Ovary (tissue), 10 donors: ENCODE measurements at regions of chr9 and their contacts with region 1.

Region 1: DNA sequence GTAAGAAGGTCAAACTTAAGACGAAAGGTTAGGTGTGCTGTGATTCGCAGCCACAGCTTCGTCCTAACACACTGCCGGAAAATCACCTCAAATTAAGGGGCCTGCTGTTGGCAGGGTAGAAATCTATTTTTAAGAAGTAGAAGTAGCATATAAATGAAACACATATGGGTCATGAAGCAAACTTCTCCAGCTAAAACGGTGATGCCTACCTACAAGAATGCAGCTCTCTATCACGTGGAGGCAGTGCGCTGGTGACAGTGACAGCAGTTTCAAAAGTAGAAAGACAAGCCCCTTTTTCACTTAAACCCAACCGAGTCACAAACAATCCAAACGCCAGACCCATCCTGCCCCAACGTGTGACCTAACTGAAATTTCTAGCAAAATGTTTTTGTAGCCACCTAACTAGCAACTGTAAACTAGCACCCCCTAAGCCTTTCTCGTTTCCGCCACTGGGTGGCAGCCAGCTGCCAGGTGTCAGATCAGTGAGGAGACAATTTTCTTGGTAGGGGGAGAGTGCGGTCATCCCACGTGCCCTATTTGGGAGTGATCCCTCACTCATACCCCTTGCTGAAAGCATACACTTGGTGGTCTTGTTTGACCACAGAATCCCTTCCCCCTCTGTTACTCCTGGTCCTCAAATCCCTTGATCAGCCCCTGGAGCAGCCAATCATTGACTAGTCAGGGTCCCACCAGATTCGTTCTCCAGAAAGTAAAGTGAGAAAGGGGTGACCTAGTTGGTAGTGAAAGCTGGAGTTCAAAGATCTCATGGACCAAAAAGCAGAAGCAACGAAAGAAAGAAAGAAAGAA is 71.8 kb upstream of the MAMDC2 start:
- DNase-seq: peak; percentile 81 to 89 (median 84)
- H3K4me3 ChIP-seq: no peak overlapping the region
- H3K27ac ChIP-seq: no peak overlapping the region
- H3K4me1 ChIP-seq: no peaks in the 10 kb centered on the region
- H3K27me3 ChIP-seq: no peaks in the 10 kb centered on the region
- CTCF ChIP-seq: peak; percentile 64 to 89 (median 83)
- EP300 ChIP-seq: no peak
- POLR2A ChIP-seq: no peak

Region 2: GRCh38 chr9:69898714-69899209 is 73.1 kb before region 1 on chr9:
- intact Hi-C with region 1: no loop called
- DNase-seq: no peak
- H3K4me3 ChIP-seq: no peak overlapping the region
- H3K27ac ChIP-seq: no peak overlapping the region
- H3K4me1 ChIP-seq: no peaks in the 10 kb centered on the region
- H3K27me3 ChIP-seq: no peaks in the 10 kb centered on the region
- CTCF ChIP-seq: no peak
- EP300 ChIP-seq: no peak
- POLR2A ChIP-seq: no peak

Region 3: DNA sequence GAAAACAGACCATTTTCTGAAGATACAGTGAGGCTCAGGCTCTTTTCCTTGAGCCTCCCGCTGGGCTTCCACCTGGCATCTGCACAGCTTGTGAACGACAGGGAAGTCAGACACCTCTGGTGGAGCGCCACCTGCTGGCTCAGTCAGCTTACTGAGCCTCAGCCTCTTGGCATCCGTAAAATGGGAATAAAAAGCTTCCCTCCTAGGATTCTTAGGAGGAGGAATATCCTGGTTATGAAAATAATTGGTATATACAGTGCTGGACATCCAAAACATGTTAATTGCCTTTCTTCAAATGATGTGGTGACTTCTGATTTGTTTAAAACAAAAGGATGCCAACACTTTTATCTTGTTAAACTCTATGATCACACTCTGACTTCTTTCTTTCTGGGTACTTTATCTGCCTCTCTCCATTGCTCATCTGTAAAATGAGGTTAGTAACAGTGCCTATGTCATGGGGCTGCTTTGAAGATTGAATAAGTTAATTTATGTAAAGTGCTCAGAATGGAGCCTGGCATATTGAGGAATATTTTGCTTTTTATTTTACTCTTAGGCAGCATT is 139.3 kb after region 1 on chr9:
- intact Hi-C with region 1: loop called (anchors 2 to 5 kb)
- DNase-seq: peak; percentile 83 to 91 (median 87)
- H3K4me3 ChIP-seq: no peak overlapping the region
- H3K27ac ChIP-seq: no peak overlapping the region
- H3K4me1 ChIP-seq: peaks cover 1% of the 10 kb centered on the region
- H3K27me3 ChIP-seq: no peaks in the 10 kb centered on the region
- CTCF ChIP-seq: peak; percentile 47 to 76 (median 68)
- EP300 ChIP-seq: no peak
- POLR2A ChIP-seq: no peak

Region 4: DNA sequence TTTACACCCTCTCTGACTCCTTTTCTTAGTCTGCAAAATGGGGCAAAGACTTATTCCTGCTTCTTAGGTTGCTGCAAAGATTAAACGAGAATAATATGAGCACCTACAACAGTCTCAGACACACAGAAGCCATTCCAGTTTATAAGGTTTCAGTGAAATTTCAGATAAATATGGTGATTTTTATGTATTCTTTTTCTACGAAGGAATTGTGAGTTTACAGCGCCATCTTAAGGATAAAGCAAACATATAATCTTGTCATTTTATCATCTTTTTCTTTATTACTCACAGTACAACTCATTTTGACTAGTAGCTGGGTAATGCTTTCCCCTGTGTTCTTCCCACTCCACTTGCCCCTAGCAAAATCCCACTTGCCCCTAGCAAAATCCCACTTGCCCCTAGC is 257.7 kb after region 1 on chr9:
- intact Hi-C with region 1: loop called in 1 of 4 experiments (anchors 5 kb)
- DNase-seq: no peak
- H3K4me3 ChIP-seq: no peak overlapping the region
- H3K27ac ChIP-seq: no peak overlapping the region
- H3K4me1 ChIP-seq: peaks cover 5% of the 10 kb centered on the region
- H3K27me3 ChIP-seq: no peaks in the 10 kb centered on the region
- CTCF ChIP-seq: peak; percentile 36 to 44 (median 44)
- EP300 ChIP-seq: no peak
- POLR2A ChIP-seq: no peak

Region 5: GRCh38 chr9:70318002-70318401 is 346.2 kb after region 1 on chr9:
- intact Hi-C with region 1: no loop called
- DNase-seq: no peak
- H3K4me3 ChIP-seq: no peak overlapping the region
- H3K27ac ChIP-seq: no peak overlapping the region
- H3K4me1 ChIP-seq: no peaks in the 10 kb centered on the region
- H3K27me3 ChIP-seq: no peaks in the 10 kb centered on the region
- CTCF ChIP-seq: no peak
- EP300 ChIP-seq: no peak
- POLR2A ChIP-seq: no peak

Region 6: DNA sequence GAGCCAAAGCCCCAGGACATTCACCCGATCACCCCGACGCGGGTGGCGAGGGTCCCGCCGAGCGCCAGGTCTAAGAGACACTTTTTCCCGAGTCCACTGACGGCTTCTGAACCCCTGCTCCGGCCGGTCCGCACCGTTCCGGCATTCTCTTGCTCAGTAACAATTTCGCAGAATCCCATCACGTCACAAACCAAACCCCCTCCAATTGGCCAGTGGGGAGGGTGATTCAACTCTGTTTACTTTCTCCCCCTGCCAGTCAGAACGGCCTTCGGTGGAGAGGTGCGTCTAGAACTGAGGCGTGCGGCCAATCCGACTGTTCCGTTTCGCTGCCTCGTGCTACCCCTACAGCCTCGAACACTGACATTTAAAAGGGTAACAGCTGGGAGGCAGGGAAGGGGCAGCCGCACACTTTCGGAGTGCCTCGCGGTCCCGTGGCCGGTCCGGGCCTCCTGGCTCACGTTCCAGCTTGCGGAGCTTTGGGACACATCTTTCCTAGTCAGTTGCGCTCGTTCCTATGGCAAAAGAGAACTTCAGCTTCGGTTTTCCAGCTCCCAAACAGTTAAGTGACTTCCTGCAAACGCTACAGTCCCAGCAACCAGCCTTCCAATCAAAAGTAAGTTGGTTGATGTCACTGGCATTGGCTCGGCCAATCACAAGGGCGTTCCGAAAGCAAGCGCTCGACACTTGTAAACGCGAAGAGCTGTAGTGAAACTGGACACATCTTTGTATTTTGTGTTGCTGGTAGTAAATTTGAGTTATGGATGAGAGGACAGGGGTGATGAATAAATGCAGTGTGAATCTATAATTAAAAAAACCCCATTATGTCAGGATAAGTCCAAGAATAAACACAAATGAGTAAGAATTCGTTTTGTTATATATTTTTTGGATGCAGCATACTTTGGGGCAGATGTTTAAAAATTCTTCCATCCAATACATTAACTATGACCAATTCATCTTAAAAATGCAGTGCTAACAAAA is 442.2 kb after region 1 on chr9 and contains the start of gene KLF9:
- intact Hi-C with region 1: loop called in 1 of 4 experiments (anchors 10 kb)
- DNase-seq: peak; percentile 93 to 98 (median 94)
- H3K4me3 ChIP-seq: peak within 1 kb of the TSS; percentile 97
- H3K27ac ChIP-seq: peak within 1 kb of the TSS; percentile 98 to 100
- H3K4me1 ChIP-seq: peaks cover 7% of the 10 kb centered on the region
- H3K27me3 ChIP-seq: no peaks in the 10 kb centered on the region
- CTCF ChIP-seq: no peak
- EP300 ChIP-seq: peak; percentile 80
- POLR2A ChIP-seq: peak; percentile 92
- total RNA-seq, gene KLF9: 15.1 to 171 (median 91.0) TPM